Right ventricle myocardium inferior (tissue), 1 donor: ENCODE measurements at regions of chr6 and their contacts with region 1.

Region 1: GRCh38 chr6:47097092-47097945 is 55.2 kb upstream of the ADGRF1 start:
- DNase-seq: no peak
- ATAC-seq: peak; percentile 72

Region 2: GRCh38 chr6:47146428-47147174 is 49.3 kb after region 1 on chr6:
- intact Hi-C with region 1: loop called (anchors 5 kb)
- DNase-seq: no peak
- ATAC-seq: peak; percentile 82

Region 3: GRCh38 chr6:47242483-47243386 is 145.4 kb after region 1 on chr6:
- intact Hi-C with region 1: loop called (anchors 5 kb)
- DNase-seq: peak; percentile 93
- ATAC-seq: peak; percentile 95